ENCODE measurements at regions of chr9 and their contacts with region 1.

Region 1: DNA sequence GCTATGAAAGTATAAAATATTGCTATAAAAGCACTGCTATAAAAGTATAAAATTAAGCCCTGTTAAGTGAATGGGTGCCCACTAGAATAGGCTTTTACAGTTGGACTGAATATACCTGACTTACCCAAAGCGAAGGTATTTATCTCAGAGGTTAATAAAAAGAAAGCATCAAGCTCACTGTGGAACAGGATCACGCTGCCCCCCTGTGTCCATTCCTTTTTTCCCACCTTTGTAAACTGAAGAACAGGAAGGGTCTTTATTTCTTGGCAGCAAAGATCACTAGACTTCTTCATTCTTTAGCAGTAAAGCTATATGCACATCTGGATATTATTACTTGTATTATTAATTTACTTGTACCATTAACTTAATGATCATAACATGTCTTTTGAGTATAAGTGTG is 22.1 kb upstream of the PLPP6 start:
- DNase-seq: peak; percentile 15 to 75 (median 57)
- ATAC-seq: peak; percentile 71
- H3K4me3 ChIP-seq: no peak overlapping the region
- H3K4me3 Mint-ChIP-seq: no peak overlapping the region
- H3K27ac ChIP-seq: no peak overlapping the region
- H3K27ac Mint-ChIP-seq: no peak overlapping the region
- H3K4me1 ChIP-seq: no peaks in the 10 kb centered on the region
- H3K4me1 Mint-ChIP-seq: peaks cover 15% of the 10 kb centered on the region
- H3K27me3 ChIP-seq: no peaks in the 10 kb centered on the region
- H3K27me3 Mint-ChIP-seq: no peaks in the 10 kb centered on the region
- CTCF ChIP-seq: peak; percentile 70

Region 2: GRCh38 chr9:4315582-4316215 is 324.3 kb before region 1 on chr9:
- CTCF ChIA-PET with region 1: interaction called, 10 read pairs
- POLR2A ChIA-PET with region 1: interaction called, 3 read pairs
- intact Hi-C with region 1: loop called (anchors 1 kb)
- DNase-seq: peak; percentile 42 to 85 (median 72)
- ATAC-seq: peak; percentile 90
- H3K4me3 ChIP-seq: no peak overlapping the region
- H3K4me3 Mint-ChIP-seq: no peak overlapping the region
- H3K27ac ChIP-seq: no peak overlapping the region
- H3K27ac Mint-ChIP-seq: no peak overlapping the region
- H3K4me1 ChIP-seq: peaks cover 19% of the 10 kb centered on the region
- H3K4me1 Mint-ChIP-seq: peaks cover 19% of the 10 kb centered on the region
- H3K27me3 ChIP-seq: no peaks in the 10 kb centered on the region
- H3K27me3 Mint-ChIP-seq: peaks cover 5% of the 10 kb centered on the region
- CTCF ChIP-seq: peak; percentile 76

Region 3: GRCh38 chr9:4382722-4383317 is 257.2 kb before region 1 on chr9:
- CTCF ChIA-PET with region 1: interaction called, 59 read pairs
- POLR2A ChIA-PET with region 1: no interaction called
- intact Hi-C with region 1: loop called (anchors 1 kb)
- DNase-seq: peak in 3 of 9 experiments; percentile 20 to 60 (median 45)
- ATAC-seq: peak; percentile 42
- H3K4me3 ChIP-seq: no peak overlapping the region
- H3K4me3 Mint-ChIP-seq: no peak overlapping the region
- H3K27ac ChIP-seq: no peak overlapping the region
- H3K27ac Mint-ChIP-seq: no peak overlapping the region
- H3K4me1 ChIP-seq: no peaks in the 10 kb centered on the region
- H3K4me1 Mint-ChIP-seq: peaks cover 3% of the 10 kb centered on the region
- H3K27me3 ChIP-seq: peaks cover 0 to 2% of the 10 kb centered on the region in 2 experiments
- H3K27me3 Mint-ChIP-seq: no peaks in the 10 kb centered on the region
- CTCF ChIP-seq: peak; percentile 53

Region 4: GRCh38 chr9:4559261-4560182 is 80.5 kb before region 1 on chr9:
- CTCF ChIA-PET with region 1: no interaction called
- POLR2A ChIA-PET with region 1: no interaction called
- intact Hi-C with region 1: loop called in 1 of 2 experiments (anchors 2 kb)
- DNase-seq: no peak
- ATAC-seq: no peak
- H3K4me3 ChIP-seq: no peak overlapping the region
- H3K4me3 Mint-ChIP-seq: no peak overlapping the region
- H3K27ac ChIP-seq: no peak overlapping the region
- H3K27ac Mint-ChIP-seq: no peak overlapping the region
- H3K4me1 ChIP-seq: peaks cover 24% of the 10 kb centered on the region
- H3K4me1 Mint-ChIP-seq: peaks cover 26% of the 10 kb centered on the region
- H3K27me3 ChIP-seq: no peaks in the 10 kb centered on the region
- H3K27me3 Mint-ChIP-seq: no peaks in the 10 kb centered on the region
- CTCF ChIP-seq: no peak

Region 5: GRCh38 chr9:4596165-4596922 is 43.7 kb before region 1 on chr9:
- CTCF ChIA-PET with region 1: interaction called, 7 read pairs
- POLR2A ChIA-PET with region 1: interaction called, 4 read pairs
- intact Hi-C with region 1: loop called (anchors 1 to 2 kb)
- DNase-seq: peak; percentile 21 to 87 (median 61)
- ATAC-seq: peak; percentile 90
- H3K4me3 ChIP-seq: no peak overlapping the region
- H3K4me3 Mint-ChIP-seq: peak overlapping the region; percentile 62
- H3K27ac ChIP-seq: peak overlapping the region; percentile 57 to 68
- H3K27ac Mint-ChIP-seq: peak overlapping the region; percentile 98
- H3K4me1 ChIP-seq: peaks cover 49% of the 10 kb centered on the region
- H3K4me1 Mint-ChIP-seq: peaks cover 61% of the 10 kb centered on the region
- H3K27me3 ChIP-seq: no peaks in the 10 kb centered on the region
- H3K27me3 Mint-ChIP-seq: no peaks in the 10 kb centered on the region
- CTCF ChIP-seq: peak; percentile 8

Region 6: DNA sequence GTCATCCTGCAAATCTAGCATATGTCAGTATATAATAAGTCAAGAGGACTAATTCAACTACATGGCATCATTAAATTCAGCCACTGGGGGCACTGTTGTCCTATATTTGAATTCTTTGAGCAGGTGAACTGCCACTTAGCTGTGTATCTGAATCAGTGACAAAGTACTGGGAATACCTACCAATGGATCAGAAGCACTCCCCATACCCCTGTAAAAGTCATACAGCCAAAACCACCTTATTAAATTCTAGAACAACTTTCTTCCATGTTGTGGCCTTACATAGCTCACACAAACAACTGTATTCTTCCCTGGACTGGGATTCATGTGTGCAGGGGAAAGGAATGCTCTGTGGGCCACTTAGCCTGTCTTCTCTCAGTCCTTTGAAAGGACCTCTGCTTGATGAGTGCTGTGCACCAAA is 35.3 kb before region 1 on chr9:
- CTCF ChIA-PET with region 1: interaction called, 16 read pairs
- POLR2A ChIA-PET with region 1: interaction called, 4 read pairs
- intact Hi-C with region 1: loop called in 1 of 2 experiments (anchors 2 kb)
- DNase-seq: peak in 8 of 9 experiments; percentile 46 to 78 (median 70)
- ATAC-seq: peak; percentile 74
- H3K4me3 ChIP-seq: no peak overlapping the region
- H3K4me3 Mint-ChIP-seq: no peak overlapping the region
- H3K27ac ChIP-seq: no peak overlapping the region
- H3K27ac Mint-ChIP-seq: peak overlapping the region; percentile 81
- H3K4me1 ChIP-seq: peaks cover 22% of the 10 kb centered on the region
- H3K4me1 Mint-ChIP-seq: peaks cover 43% of the 10 kb centered on the region
- H3K27me3 ChIP-seq: no peaks in the 10 kb centered on the region
- H3K27me3 Mint-ChIP-seq: no peaks in the 10 kb centered on the region
- CTCF ChIP-seq: peak; percentile 34

Region 7: DNA sequence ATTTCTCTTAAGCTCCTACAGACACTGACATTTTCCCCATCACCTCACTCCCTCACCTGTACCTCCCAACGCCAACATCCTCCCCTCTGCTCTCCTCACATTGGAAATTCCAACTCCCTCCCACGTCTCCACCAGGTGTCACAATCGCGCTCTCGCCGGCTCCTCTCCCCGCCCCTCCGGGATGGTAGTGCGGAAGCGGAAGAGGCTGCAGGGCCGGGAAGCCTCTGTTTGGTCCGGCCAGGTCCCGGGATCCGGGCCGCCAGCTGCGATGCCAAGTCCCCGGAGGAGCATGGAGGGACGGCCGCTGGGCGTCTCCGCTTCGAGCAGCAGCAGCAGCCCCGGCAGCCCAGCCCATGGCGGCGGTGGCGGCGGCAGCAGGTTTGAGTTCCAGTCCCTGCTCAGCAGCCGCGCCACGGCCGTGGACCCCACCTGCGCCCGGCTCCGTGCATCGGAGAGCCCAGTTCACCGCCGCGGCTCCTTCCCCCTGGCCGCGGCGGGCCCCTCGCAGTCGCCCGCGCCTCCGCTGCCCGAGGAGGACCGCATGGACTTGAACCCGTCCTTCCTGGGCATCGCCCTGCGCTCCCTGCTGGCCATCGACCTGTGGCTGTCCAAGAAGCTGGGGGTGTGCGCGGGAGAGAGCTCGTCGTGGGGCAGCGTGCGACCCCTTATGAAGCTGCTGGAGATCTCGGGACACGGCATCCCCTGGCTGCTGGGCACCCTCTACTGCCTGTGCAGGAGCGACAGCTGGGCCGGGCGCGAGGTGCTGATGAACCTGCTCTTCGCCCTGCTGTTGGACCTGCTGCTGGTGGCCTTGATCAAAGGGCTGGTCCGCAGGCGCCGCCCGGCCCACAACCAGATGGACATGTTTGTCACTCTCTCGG is 22.3 kb after region 1 on chr9 and contains the start of gene PLPP6:
- CTCF ChIA-PET with region 1: interaction called, 10 read pairs
- POLR2A ChIA-PET with region 1: interaction called, 3 read pairs
- intact Hi-C with region 1: no loop called
- DNase-seq: peak; percentile 49 to 92 (median 78)
- ATAC-seq: peak; percentile 78
- H3K4me3 ChIP-seq: peak within 1 kb of the TSS; percentile 74 to 88
- H3K4me3 Mint-ChIP-seq: peak within 1 kb of the TSS; percentile 98
- H3K27ac ChIP-seq: peak within 1 kb of the TSS; percentile 67 to 70
- H3K27ac Mint-ChIP-seq: peak within 1 kb of the TSS; percentile 98
- H3K4me1 ChIP-seq: peaks cover 54% of the 10 kb centered on the region
- H3K4me1 Mint-ChIP-seq: peaks cover 66% of the 10 kb centered on the region
- H3K27me3 ChIP-seq: no peaks in the 10 kb centered on the region
- H3K27me3 Mint-ChIP-seq: no peaks in the 10 kb centered on the region
- CTCF ChIP-seq: peak; percentile 59
- total RNA-seq, gene PLPP6: 4.4 TPM

Measured in CD8-positive, alpha-beta T cell (primary cell).